ENCODE measurements at regions of chr1 and their contacts with region 1.

Region 1: DNA sequence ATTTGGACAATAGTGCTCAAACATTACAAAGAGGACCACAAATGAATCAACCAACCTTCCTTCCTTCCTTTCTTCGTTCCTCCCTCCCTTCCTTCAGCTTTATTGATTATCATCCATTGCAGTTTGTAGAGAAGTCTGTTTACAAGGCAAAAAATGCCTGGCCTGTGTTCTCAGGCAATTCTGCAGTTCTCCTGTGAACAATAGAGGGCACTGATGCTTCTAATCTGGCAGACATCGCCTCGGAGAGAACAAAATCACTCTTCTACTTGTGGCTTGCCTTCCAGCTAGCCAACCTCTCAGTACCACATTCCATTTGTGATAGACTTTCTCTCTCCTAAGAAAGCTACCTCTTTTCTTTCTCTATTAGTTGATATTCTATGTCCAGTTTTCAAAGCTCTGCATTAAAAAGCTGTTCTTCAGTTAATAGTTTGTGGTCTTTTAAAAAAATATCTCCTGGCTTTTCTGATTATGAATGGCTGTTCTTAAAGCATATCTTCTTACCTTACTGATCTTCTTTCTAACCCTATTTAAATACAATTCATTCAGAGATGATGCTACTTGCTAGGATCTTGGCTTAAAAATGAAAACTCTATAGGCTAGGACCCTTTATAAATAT is 26.9 kb upstream of the ESRRG start:
- DNase-seq: peak in 3 of 5 donors; percentile 15 to 30 (median 19)
- ATAC-seq: peak; percentile 71 to 86 (median 81)
- H3K4me3 ChIP-seq: no peak overlapping the region
- H3K27ac ChIP-seq: peak overlapping the region in 7 of 12 donors; percentile 23 to 81 (median 33)
- H3K4me1 ChIP-seq: peaks cover 0 to 29% (median 1%) of the 10 kb centered on the region in 12 donors
- H3K27me3 ChIP-seq: no peaks in the 10 kb centered on the region
- CTCF ChIP-seq: peak in 11 of 12 donors; percentile 3 to 66 (median 54)
- POLR2A ChIP-seq: no peak

Region 2: DNA sequence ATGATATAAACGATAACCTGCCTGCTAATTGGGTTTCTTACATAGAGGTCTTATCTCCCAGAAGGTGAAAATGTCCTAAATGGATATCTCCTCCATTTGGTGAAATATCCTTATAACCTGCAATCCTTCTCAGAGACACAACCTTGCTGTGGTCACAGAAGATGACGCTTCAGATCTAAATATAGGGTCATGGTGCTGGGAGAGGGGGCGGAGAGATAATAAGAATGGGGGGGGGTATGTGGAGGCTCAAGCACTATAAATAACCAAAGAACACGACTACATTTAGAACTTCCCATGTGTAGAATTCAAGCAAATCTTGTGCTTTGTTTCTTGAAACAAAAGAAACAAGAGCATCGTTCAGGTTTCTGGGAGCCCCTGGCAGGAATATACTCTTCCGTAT is 233.7 kb after region 1 on chr1:
- intact Hi-C with region 1: loop called in 1 of 10 experiments (anchors 10 kb)
- DNase-seq: peak in 2 of 5 donors; percentile 18 to 28
- ATAC-seq: peak; percentile 83 to 96 (median 88)
- H3K4me3 ChIP-seq: no peak overlapping the region
- H3K27ac ChIP-seq: peak overlapping the region in 6 of 12 donors; percentile 38 to 67 (median 52)
- H3K4me1 ChIP-seq: peaks cover 0 to 10% (median 0%) of the 10 kb centered on the region in 12 donors
- H3K27me3 ChIP-seq: no peaks in the 10 kb centered on the region
- CTCF ChIP-seq: no peak
- POLR2A ChIP-seq: no peak

Region 3: DNA sequence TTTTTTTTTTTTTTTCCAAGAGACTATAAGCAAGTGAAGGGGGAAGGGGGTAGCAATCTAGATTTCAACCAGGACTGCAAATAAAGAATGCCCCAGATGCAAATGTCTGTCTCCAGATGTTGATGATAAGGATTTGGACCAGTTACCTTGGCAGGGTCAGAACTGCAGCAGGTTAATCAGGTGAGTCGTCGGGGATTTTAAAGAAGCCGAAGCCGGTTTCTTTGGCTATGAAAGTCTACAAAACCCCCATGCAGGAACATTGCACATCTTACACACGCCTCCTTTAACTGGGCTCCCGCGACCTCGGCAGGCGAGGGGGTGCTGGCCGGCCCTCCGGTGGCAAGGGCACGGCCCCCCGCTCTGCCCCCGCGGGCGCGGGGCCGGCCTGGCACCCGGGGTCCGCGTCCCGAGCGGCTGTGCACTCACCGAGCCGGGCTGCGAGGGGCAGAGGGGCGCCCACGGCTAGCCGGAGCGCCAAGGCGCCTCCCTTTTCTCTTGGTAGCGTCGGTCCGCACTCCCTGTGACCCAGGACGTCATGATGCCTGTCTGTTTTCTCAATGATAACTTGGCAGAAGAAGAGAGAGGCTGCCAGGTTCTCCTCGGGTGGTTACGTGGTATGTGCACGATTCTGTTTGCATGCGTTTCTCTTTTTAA is 339.4 kb after region 1 on chr1:
- intact Hi-C with region 1: loop called in 7 of 10 experiments (anchors 5 to 10 kb)
- DNase-seq: peak; percentile 28 to 65 (median 51)
- ATAC-seq: peak; percentile 70 to 92 (median 84)
- H3K4me3 ChIP-seq: peak overlapping the region; percentile 35 to 79 (median 54)
- H3K27ac ChIP-seq: peak overlapping the region; percentile 73 to 98 (median 82)
- H3K4me1 ChIP-seq: peaks cover 0 to 16% (median 3%) of the 10 kb centered on the region in 12 donors
- H3K27me3 ChIP-seq: peaks cover 0 to 14% (median 0%) of the 10 kb centered on the region in 9 donors
- CTCF ChIP-seq: no peak
- POLR2A ChIP-seq: no peak

Region 4: DNA sequence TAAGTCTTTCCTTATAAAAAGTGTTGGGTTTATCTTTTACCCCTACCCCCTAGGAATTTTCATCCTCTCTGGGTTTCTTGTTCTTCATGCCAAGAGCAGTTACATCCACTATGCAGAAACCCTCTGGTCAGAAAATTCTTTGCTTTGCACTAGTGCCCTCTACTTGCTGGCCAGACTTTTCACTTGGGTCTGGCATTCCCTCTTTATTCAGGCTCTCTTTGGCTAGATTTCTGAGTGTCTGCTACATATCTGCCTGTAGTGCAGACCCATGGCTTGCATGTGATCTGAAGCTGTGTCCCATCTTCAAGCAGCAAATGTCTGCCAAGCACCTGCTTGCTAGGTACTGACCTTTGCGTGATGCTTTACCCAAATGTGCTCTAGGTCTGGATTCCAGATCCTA is 643.8 kb after region 1 on chr1:
- intact Hi-C with region 1: loop called in 1 of 10 experiments (anchors 5 kb)
- DNase-seq: no peak
- ATAC-seq: peak in 1 of 4 donors; percentile 48
- H3K4me3 ChIP-seq: no peak overlapping the region
- H3K27ac ChIP-seq: no peak overlapping the region
- H3K4me1 ChIP-seq: no peaks in the 10 kb centered on the region
- H3K27me3 ChIP-seq: no peaks in the 10 kb centered on the region
- CTCF ChIP-seq: peak in 6 of 12 donors; percentile 14 to 35 (median 26)
- POLR2A ChIP-seq: no peak